ENCODE measurements at regions of chr4 and their contacts with region 1.

Region 1: GRCh38 chr4:18795794-18796193 is 774.2 kb upstream of the LCORL start:
- DNase-seq: no peak
- H3K4me3 ChIP-seq: no peak overlapping the region
- H3K27ac ChIP-seq: no peak overlapping the region
- H3K4me1 ChIP-seq: no peaks in the 10 kb centered on the region
- H3K27me3 ChIP-seq: no peaks in the 10 kb centered on the region
- CTCF ChIP-seq: no peak

Region 2: DNA sequence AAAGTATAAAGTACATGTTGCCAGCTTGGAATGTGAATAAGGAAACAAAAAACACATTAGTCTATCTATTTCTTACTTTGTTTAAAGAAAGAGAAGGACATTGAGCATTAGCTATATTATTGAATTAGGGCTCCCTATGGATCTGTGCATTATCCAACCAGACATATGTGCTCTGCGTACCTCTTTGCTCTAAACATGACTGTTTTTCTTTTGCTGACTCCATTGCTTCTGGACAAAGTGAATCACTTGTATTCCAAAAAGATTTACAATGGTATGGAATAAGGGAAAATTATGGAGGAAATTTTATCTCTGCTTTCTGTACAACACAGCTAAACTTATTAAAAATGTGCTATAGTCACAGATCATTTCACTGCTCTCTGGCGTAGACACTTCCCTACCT is 46.4 kb before region 1 on chr4:
- CTCF ChIA-PET with region 1: no interaction called
- POLR2A ChIA-PET with region 1: no interaction called
- intact Hi-C with region 1: loop called (anchors 2 kb)
- DNase-seq: no peak
- H3K4me3 ChIP-seq: no peak overlapping the region
- H3K27ac ChIP-seq: no peak overlapping the region
- H3K4me1 ChIP-seq: no peaks in the 10 kb centered on the region
- H3K27me3 ChIP-seq: peaks cover 3% of the 10 kb centered on the region
- CTCF ChIP-seq: no peak